ENCODE measurements at regions of chr4 and their contacts with region 1.

Region 1: GRCh38 chr4:39134683-39135319 is 47.5 kb upstream of the WDR19 start:
- DNase-seq: no peak
- ATAC-seq: no peak
- H3K4me3 ChIP-seq: no peak overlapping the region
- H3K27ac ChIP-seq: no peak overlapping the region
- H3K4me1 ChIP-seq: peaks cover 4% of the 10 kb centered on the region
- H3K27me3 ChIP-seq: no peaks in the 10 kb centered on the region
- CTCF ChIP-seq: no peak
- POLR2A ChIP-seq: no peak

Region 2: DNA sequence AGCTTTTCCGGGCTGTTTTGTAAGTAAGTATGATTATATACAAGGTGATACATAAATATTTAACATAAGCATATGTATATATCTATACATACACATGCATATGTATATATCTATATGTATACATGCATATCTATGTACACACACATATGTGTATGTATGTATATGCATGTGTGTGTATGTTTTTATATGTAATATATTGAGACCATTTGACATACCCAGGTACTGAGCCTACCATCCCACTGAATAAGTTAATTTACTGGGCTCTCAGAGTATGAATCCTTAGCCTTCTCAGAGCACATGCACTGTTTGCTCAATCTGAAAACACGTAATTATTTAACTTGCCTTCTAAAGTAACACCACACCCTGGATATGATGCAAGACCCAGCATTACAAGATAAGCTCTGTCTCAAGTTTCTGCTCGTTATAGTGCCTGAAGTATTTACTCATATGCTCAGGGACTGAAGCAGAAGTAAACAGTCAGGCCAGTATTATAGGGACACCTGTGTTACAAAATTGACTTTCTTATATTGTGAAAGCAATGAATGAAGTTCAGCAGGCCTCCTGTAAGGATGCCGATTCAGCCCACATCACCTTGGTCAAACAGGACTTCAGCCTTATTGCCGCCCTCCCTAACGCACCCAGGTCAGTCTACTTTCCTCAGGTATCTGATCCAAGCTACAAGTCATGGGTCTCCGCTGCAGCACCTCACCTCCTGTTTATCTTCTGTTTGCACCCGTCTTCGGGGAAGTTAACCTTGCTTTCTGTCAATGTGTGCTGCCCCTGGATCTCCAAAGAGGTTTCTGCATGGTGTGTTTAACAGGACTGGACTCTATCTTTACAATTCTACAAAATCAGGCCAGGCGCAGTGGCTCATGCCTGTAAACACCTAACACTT is 513.8 kb before region 1 on chr4:
- intact Hi-C with region 1: no loop called
- DNase-seq: peak; percentile 35 to 79 (median 58)
- ATAC-seq: peak; percentile 95
- H3K4me3 ChIP-seq: no peak overlapping the region
- H3K27ac ChIP-seq: peak overlapping the region; percentile 69 to 83 (median 79)
- H3K4me1 ChIP-seq: peaks cover 27% of the 10 kb centered on the region
- H3K27me3 ChIP-seq: no peaks in the 10 kb centered on the region
- CTCF ChIP-seq: no peak
- POLR2A ChIP-seq: peak in 1 of 3 donors; percentile 27

Region 3: DNA sequence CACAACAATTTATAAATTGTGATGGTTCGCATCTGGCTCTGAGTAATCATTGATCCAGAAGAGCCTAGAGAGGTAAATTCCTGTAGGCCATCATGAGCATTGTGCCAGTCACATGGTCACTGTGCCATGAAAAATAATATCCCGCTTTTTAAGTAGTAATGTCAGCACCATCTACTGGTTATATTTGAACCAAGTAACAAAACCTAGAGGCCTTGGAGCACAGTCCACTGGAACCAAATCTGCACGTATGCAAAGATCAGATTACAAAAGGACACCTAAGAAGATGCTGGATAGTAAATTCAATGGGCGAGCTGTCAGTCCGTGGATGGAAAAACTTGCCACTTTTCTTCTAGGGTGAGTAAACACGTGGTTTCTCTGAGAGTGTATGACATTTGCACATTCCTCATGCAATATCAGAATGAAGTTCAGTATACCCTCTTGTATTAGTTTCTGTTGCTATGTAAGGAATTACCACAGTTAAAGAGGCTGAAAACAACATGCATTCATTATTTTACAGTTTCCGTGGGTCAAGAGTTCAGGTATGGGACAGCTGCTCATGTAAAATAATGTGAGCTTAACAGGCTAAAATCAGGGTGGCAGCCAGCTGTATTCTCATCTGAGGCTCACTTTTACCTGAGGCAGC is 240.3 kb before region 1 on chr4:
- intact Hi-C with region 1: loop called (anchors 10 kb)
- DNase-seq: no peak
- ATAC-seq: no peak
- H3K4me3 ChIP-seq: no peak overlapping the region
- H3K27ac ChIP-seq: no peak overlapping the region
- H3K4me1 ChIP-seq: peaks cover 4% of the 10 kb centered on the region
- H3K27me3 ChIP-seq: no peaks in the 10 kb centered on the region
- CTCF ChIP-seq: peak in 1 of 7 experiments; percentile 4
- POLR2A ChIP-seq: no peak